ENCODE measurements at regions of chr18 and their contacts with region 1.

Region 1: GRCh38 chr18:46333431-46334135 is 229.4 kb downstream of the HAUS1 start:
- DNase-seq: peak; percentile 40 to 60
- ATAC-seq: peak; percentile 70 to 87 (median 78)
- H3K4me3 ChIP-seq: peak overlapping the region; percentile 75
- H3K27ac ChIP-seq: peak overlapping the region; percentile 44
- H3K4me1 ChIP-seq: peaks cover 11% of the 10 kb centered on the region
- H3K27me3 ChIP-seq: no peaks in the 10 kb centered on the region
- CTCF ChIP-seq: no peak

Region 2: GRCh38 chr18:46289931-46290330 is 43.7 kb before region 1 on chr18:
- intact Hi-C with region 1: loop called in 1 of 2 experiments (anchors 5 kb)
- DNase-seq: no peak
- ATAC-seq: peak in 1 of 4 donors; percentile 14
- H3K4me3 ChIP-seq: no peak overlapping the region
- H3K27ac ChIP-seq: no peak overlapping the region
- H3K4me1 ChIP-seq: peaks cover 7% of the 10 kb centered on the region
- H3K27me3 ChIP-seq: no peaks in the 10 kb centered on the region
- CTCF ChIP-seq: no peak

Region 3: GRCh38 chr18:46393230-46393629 is 59.6 kb after region 1 on chr18:
- intact Hi-C with region 1: no loop called
- DNase-seq: no peak
- ATAC-seq: peak in 1 of 4 donors; percentile 17
- H3K4me3 ChIP-seq: no peak overlapping the region
- H3K27ac ChIP-seq: no peak overlapping the region
- H3K4me1 ChIP-seq: peaks cover 2% of the 10 kb centered on the region
- H3K27me3 ChIP-seq: no peaks in the 10 kb centered on the region
- CTCF ChIP-seq: no peak

Region 4: DNA sequence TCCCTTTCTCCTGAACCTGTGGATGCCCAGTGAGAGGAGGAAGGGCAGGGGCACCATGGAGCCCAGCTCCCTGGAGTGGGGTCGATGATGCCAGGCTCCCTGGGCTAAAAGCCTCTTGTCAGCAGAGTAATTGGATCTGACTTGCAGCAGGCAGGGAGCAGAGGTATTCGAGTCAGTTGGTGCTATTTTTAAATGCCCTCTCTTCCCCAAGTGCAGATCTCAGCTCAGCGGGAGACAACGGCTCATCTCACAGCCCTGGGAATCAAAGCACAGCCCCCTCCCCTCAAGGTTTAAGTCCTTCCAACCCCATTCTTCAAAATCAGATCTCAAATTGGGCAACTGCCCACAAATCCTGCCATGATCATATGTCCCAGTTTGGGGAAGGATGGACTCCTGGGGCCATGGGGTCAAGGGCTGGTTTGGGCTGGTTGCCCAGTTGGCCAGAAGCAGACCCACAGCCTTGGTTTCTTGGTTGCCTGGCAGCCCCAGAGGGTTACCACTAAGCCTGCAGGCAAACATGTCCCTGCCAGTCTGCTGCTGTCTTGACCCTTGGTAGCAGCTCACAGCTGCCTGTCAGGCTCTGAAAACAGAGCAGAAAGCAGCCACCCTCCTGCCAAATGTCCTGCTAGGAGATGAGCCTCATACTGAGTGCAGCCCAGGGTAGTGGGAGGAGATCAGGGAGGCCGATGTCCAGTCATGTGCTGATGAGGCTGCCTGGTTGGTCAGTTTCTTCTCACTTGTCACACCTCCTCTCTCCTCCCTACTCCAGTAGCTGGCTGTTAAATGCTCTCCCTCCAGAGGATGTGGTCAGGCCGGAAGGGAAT is 78.5 kb after region 1 on chr18:
- intact Hi-C with region 1: loop called in 1 of 2 experiments (anchors 2 kb)
- DNase-seq: peak; percentile 58 to 81
- ATAC-seq: peak; percentile 84 to 91 (median 86)
- H3K4me3 ChIP-seq: peak overlapping the region; percentile 8
- H3K27ac ChIP-seq: peak overlapping the region; percentile 91
- H3K4me1 ChIP-seq: peaks cover 75% of the 10 kb centered on the region
- H3K27me3 ChIP-seq: no peaks in the 10 kb centered on the region
- CTCF ChIP-seq: no peak